ENCODE measurements at regions of chr17 and their contacts with region 1.

Region 1: DNA sequence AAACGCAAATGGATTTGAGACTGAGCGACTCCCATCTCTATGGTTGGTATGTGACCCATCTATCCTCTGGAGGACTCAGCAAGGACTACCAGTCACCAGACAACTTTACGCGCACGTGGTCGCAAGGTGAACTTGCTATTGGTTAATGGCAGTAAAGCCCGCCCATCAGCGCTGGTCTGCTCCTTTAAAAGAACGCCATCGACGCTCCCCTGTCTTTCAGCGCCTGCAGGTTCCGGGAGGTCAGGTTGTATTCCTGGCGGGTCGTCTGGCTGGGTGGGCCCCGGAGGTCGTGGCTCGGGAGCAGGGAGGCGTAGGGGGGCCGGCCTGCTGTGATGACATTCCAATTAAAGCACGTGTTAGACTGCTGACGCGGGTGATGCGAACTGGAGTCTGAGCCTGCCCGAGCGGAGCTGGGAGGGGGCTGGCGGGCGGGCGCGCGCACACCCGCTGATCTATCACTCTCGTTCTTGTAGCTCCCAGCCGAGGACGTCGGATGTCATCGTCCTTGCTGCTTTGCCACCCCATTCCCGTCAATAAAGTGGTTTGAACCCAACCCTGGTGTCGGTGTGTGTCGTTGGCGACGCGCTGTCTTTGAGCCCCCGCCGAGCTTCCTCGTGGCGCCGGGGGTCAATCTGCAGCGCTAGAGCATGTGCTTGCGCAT is 15.9 kb upstream of the ERN1 start:
- H3K4me3 ChIP-seq: peak overlapping the region; percentile 63
- H3K27ac ChIP-seq: peak overlapping the region; percentile 91
- H3K4me1 ChIP-seq: no peaks in the 10 kb centered on the region
- CTCF ChIP-seq: no peak

Region 2: DNA sequence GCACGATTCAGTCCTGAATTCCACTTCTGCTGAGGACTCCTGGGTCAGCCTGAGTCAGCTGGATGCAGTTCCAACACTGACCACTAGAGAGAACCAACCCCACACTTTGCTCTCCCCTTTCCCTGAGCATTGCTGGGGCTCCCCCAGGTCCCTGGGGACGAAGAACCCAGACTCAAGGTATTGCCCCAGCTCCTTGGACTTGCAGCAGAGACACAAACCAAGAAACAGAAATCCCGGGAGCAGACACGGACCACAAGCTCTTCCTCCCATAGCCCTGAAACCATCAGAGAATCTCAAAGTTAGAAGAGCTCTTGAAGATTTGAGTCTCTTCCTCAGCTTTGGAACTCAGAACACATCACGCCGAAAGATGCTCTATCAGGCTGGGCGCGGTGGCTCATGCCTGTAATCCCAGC is 226.6 kb before region 1 on chr17:
- CTCF ChIA-PET with region 1: interaction called, 3 read pairs
- POLR2A ChIA-PET with region 1: interaction called, 10 read pairs
- H3K4me3 ChIP-seq: no peak overlapping the region
- H3K27ac ChIP-seq: no peak overlapping the region
- H3K4me1 ChIP-seq: no peaks in the 10 kb centered on the region
- CTCF ChIP-seq: peak; percentile 38; the same call in 1 of the 2 replicates

Region 3: DNA sequence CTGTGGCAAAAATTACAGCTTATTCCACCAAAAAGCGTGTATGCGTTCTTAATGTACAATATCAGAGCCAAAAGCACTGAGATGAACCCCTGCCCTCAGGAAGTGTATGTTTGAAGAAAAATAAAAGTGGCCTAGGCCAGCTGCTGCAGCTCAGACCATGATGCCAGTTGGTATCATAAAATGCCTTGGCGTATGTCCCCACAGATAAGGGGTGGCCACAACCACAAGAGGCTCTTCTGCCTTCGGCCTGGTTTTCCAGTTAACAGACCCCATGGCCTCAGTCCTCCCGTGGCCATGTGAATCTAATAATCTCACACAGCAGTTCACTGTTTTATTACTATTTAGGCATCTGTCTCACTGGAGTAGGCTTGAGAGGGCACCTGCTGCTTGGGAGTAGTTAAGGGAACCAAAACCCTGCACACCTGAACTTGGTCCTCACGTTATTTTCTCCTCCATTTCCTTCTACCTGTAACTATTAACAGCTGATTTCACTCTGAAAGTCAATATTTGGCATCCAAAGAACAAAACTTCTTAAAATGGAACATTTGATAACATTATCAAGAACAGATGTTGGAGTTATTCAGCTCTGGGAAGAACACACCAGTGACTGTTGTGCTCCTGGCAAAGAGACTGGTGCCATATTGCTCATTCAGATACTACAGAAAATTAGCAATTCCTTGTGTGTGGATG is 18.9 kb after region 1 on chr17:
- CTCF ChIA-PET with region 1: no interaction called
- POLR2A ChIA-PET with region 1: interaction called, 15 read pairs
- H3K4me3 ChIP-seq: no peak overlapping the region
- H3K27ac ChIP-seq: no peak overlapping the region
- H3K4me1 ChIP-seq: no peaks in the 10 kb centered on the region
- CTCF ChIP-seq: no peak

Region 4: GRCh38 chr17:64254735-64255134 is 108.8 kb after region 1 on chr17:
- CTCF ChIA-PET with region 1: no interaction called
- POLR2A ChIA-PET with region 1: interaction called, 14 read pairs
- H3K4me3 ChIP-seq: no peak overlapping the region
- H3K27ac ChIP-seq: no peak overlapping the region
- H3K4me1 ChIP-seq: peaks cover 1% of the 10 kb centered on the region
- CTCF ChIP-seq: no peak

Region 5: GRCh38 chr17:64262417-64263260 is 116.8 kb after region 1 on chr17 and contains the start of gene TEX2:
- CTCF ChIA-PET with region 1: interaction called, 4 read pairs
- POLR2A ChIA-PET with region 1: interaction called, 19 read pairs
- H3K4me3 ChIP-seq: peak within 1 kb of the TSS; percentile 85
- H3K27ac ChIP-seq: peak within 1 kb of the TSS; percentile 74
- H3K4me1 ChIP-seq: peaks cover 21% of the 10 kb centered on the region
- CTCF ChIP-seq: peak; percentile 14; the same call in 1 of the 2 replicates

Region 6: GRCh38 chr17:64281962-64282727 is 136.3 kb after region 1 on chr17:
- CTCF ChIA-PET with region 1: interaction called, 15 read pairs
- POLR2A ChIA-PET with region 1: interaction called, 10 read pairs
- H3K4me3 ChIP-seq: no peak overlapping the region
- H3K27ac ChIP-seq: no peak overlapping the region
- H3K4me1 ChIP-seq: no peaks in the 10 kb centered on the region
- CTCF ChIP-seq: peak; percentile 48; the same call in 1 of the 2 replicates